ENCODE measurements at regions of chr3 and their contacts with region 1.

Region 1: GRCh38 chr3:30342319-30343060 is 263.9 kb upstream of the TGFBR2 start:
- DNase-seq: peak; percentile 97
- H3K4me3 Mint-ChIP-seq: peak overlapping the region; percentile 38
- H3K27ac Mint-ChIP-seq: peak overlapping the region; percentile 94
- H3K4me1 Mint-ChIP-seq: peaks cover 39% of the 10 kb centered on the region
- H3K27me3 Mint-ChIP-seq: no peaks in the 10 kb centered on the region
- CTCF ChIP-seq: no peak

Region 2: GRCh38 chr3:30112902-30113484 is 229.5 kb before region 1 on chr3:
- CTCF ChIA-PET with region 1: no interaction called
- POLR2A ChIA-PET with region 1: no interaction called
- intact Hi-C with region 1: loop called (anchors 2 kb)
- DNase-seq: peak; percentile 46
- H3K4me3 Mint-ChIP-seq: no peak overlapping the region
- H3K27ac Mint-ChIP-seq: no peak overlapping the region
- H3K4me1 Mint-ChIP-seq: peaks cover 16% of the 10 kb centered on the region
- H3K27me3 Mint-ChIP-seq: no peaks in the 10 kb centered on the region
- CTCF ChIP-seq: peak; percentile 66

Region 3: DNA sequence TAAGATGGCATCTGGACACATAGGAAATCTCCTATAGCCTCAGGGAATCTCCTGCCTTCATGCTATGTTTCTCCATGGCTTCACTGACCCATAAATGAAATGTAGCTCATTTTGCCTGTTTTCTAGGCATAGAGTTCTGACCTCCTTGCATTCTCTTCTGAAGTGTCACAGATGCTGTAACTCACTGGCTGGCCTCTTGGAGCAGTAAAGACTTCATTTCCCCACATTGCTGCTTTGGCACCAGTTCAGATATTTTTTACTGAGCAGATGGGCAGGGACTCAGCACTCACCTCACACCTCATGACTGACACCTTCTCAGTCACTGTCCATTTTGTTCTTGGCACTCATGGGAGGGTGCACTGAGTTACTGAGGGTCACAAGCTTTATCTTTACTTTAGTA is 22.8 kb before region 1 on chr3:
- CTCF ChIA-PET with region 1: interaction called, 13 read pairs
- POLR2A ChIA-PET with region 1: interaction called, 5 read pairs
- intact Hi-C with region 1: no loop called
- DNase-seq: peak; percentile 77
- H3K4me3 Mint-ChIP-seq: no peak overlapping the region
- H3K27ac Mint-ChIP-seq: peak overlapping the region; percentile 46
- H3K4me1 Mint-ChIP-seq: peaks cover 23% of the 10 kb centered on the region
- H3K27me3 Mint-ChIP-seq: no peaks in the 10 kb centered on the region
- CTCF ChIP-seq: peak; percentile 24

Region 4: GRCh38 chr3:30332196-30333021 is 10.1 kb before region 1 on chr3:
- CTCF ChIA-PET with region 1: no interaction called
- POLR2A ChIA-PET with region 1: interaction called, 17 read pairs
- intact Hi-C with region 1: no loop called
- DNase-seq: no peak
- H3K4me3 Mint-ChIP-seq: no peak overlapping the region
- H3K27ac Mint-ChIP-seq: peak overlapping the region; percentile 82
- H3K4me1 Mint-ChIP-seq: peaks cover 17% of the 10 kb centered on the region
- H3K27me3 Mint-ChIP-seq: no peaks in the 10 kb centered on the region
- CTCF ChIP-seq: no peak

Measured in MCF 10A (cell line).